A549 (cell line): ENCODE measurements at regions of chr19 and their contacts with region 1.

Region 1: GRCh38 chr19:10380313-10381102 is at the start of gene TYK2:
- DNase-seq: peak; percentile 96 to 100
- ATAC-seq: peak; percentile 97 to 99
- H3K4me3 ChIP-seq: peak within 1 kb of the TSS; percentile 91
- H3K27ac ChIP-seq: peak within 1 kb of the TSS; percentile 92 to 97
- H3K4me1 ChIP-seq: peaks cover 9% of the 10 kb centered on the region; the same call in 1 of the 3 replicates
- CTCF ChIP-seq: no peak
- EP300 ChIP-seq: no peak
- POLR2A ChIP-seq: peak; percentile 86
- RAD21 ChIP-seq: no peak
- polyA plus RNA-seq, gene TYK2: 17.0 and 41.4 TPM in 2 replicates

Region 2: GRCh38 chr19:10259162-10259905 is 121.2 kb before region 1 on chr19:
- CTCF ChIA-PET with region 1: interaction called, 77 read pairs
- POLR2A ChIA-PET with region 1: interaction called, 6 read pairs
- DNase-seq: peak in 1 of 2 experiments; percentile 86
- ATAC-seq: peak; percentile 67 to 82; a peak in 5 of 6 replicates
- H3K4me3 ChIP-seq: no peak overlapping the region
- H3K27ac ChIP-seq: 0 out of 6 replicates have a peak overlapping the region, but pooled peaks of 1 of the 2 experiments have one; percentile 21
- H3K4me1 ChIP-seq: peaks cover 15% of the 10 kb centered on the region; the same call in 2 of the 3 replicates
- CTCF ChIP-seq: peak; percentile 57
- EP300 ChIP-seq: no peak
- POLR2A ChIP-seq: no peak
- RAD21 ChIP-seq: peak; percentile 57 to 64

Region 3: DNA sequence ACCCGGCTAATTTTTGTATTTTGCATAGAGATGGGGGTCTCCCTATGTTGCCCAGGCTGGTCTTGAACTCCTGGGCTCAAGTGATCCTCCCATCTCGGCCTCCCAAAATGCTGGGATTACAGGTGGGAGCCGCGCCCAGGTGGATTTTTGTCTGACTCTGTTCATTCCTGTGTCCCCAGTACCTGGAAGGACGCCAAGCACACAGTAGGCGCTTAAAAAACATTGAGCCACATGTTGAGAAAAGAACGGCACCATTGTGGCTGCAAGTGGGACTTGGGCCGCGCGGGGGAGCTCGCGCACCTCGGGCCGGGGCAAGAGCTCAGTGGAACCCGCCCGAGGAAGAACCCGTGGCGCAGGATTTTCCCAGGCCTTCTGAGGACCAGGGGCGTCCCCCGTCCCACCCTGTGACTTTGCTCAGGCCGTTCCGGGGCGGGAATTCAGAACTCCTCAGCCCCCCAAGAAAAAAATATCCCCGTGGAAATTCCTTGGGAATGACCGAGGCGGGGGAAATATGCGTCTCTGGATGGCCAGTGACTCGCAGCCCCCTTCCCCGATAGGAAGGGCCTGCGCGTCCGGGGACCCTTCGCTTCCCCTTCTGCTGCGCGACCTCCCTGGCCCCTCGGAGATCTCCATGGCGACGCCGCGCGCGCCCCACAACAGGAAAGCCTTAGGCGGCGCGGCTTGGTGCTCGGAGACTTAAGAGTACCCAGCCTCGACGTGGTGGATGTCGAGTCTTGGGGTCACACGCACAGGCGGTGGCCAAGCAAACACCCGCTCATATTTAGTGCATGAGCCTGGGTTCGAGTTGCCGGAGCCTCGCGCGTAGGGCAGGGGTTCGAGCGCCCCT is 111.0 kb before region 1 on chr19:
- CTCF ChIA-PET with region 1: interaction called, 21 read pairs
- POLR2A ChIA-PET with region 1: interaction called, 4 read pairs
- DNase-seq: peak in 1 of 2 experiments; percentile 63
- ATAC-seq: peak; percentile 86 to 92
- H3K4me3 ChIP-seq: peak overlapping the region; percentile 17; the same call in 1 of the 3 replicates
- H3K27ac ChIP-seq: peak overlapping the region; percentile 6 to 78; a peak in 4 of 6 replicates
- H3K4me1 ChIP-seq: peaks cover 16% of the 10 kb centered on the region
- CTCF ChIP-seq: peak; percentile 79
- EP300 ChIP-seq: no peak
- POLR2A ChIP-seq: no peak
- RAD21 ChIP-seq: peak; percentile 89 to 90

Region 4: DNA sequence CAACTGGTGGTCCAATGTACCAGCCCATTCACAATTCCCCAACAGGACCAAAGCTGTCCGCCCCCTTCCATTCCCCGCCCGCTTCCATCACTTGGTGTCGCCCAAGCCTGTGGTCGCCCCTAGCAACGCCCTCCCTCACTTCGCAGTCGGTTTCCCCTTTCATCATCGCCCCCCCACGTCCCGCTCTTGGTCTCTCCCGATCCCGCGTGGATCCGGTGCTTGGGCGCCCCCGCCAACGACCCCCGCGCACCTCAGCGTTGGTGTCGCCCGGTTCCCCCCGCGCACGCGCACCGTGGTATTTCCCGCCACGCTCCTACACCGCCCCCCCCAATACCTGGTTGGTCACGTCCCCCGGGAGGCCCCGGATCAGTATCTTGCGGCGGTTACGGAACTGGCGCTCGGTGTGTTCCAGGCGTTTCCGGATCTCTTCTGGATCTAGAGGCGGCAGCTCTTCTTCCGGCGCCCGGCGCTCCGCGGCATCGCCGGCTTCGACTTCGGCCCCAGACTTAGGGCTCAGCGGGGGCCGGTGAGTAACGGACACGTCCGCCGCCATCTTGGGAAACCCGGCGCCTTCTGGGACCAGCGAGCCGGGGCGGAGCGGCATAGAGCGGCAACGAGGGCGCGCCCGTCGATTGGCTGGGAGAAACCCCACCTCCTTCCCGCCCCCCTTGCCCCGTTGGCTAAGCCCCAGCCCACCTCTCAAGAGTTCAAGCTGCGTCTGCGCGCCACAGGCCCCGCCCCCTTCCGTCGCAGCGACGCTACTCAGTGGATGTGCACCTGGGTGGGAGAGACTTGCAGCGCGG is 47.4 kb before region 1 on chr19 and contains the start of gene RAVER1:
- CTCF ChIA-PET with region 1: interaction called, 3 read pairs
- POLR2A ChIA-PET with region 1: interaction called, 12 read pairs
- DNase-seq: peak; percentile 88 to 97
- ATAC-seq: peak; percentile 77 to 88
- H3K4me3 ChIP-seq: peak within 1 kb of the TSS; percentile 76
- H3K27ac ChIP-seq: peak within 1 kb of the TSS; percentile 81 to 97
- H3K4me1 ChIP-seq: peaks cover 11% of the 10 kb centered on the region; the same call in 1 of the 3 replicates
- CTCF ChIP-seq: no peak
- EP300 ChIP-seq: no peak
- POLR2A ChIP-seq: peak; percentile 70
- RAD21 ChIP-seq: no peak
- polyA plus RNA-seq, gene RAVER1: 1.8 and 3.0 TPM in 2 replicates